ENCODE measurements at regions of chr2 and their contacts with region 1.

Region 1: GRCh38 chr2:99180755-99181623 is at the starts of genes MITD1 and MRPL30:
- DNase-seq: peak; percentile 97
- H3K4me3 Mint-ChIP-seq: peak within 1 kb of the TSS; percentile 100
- H3K27ac Mint-ChIP-seq: peak within 1 kb of the TSS; percentile 97
- H3K4me1 Mint-ChIP-seq: peaks cover 43% of the 10 kb centered on the region
- H3K27me3 Mint-ChIP-seq: no peaks in the 10 kb centered on the region
- total RNA-seq, gene MITD1: 49.9 and 52.8 TPM in 2 replicates
- total RNA-seq, gene MRPL30: 29.0 and 31.2 TPM in 2 replicates

Region 2: GRCh38 chr2:97645695-97646629 is 1535.0 kb before region 1 on chr2 and contains the start of gene COX5B:
- intact Hi-C with region 1: loop called (anchors 5 kb)
- DNase-seq: peak; percentile 100
- H3K4me3 Mint-ChIP-seq: peak within 1 kb of the TSS; percentile 94
- H3K27ac Mint-ChIP-seq: peak within 1 kb of the TSS; percentile 96
- H3K4me1 Mint-ChIP-seq: peaks cover 26% of the 10 kb centered on the region
- H3K27me3 Mint-ChIP-seq: peaks cover 4% of the 10 kb centered on the region
- total RNA-seq, gene COX5B: 227 and 233 TPM in 2 replicates

Region 3: DNA sequence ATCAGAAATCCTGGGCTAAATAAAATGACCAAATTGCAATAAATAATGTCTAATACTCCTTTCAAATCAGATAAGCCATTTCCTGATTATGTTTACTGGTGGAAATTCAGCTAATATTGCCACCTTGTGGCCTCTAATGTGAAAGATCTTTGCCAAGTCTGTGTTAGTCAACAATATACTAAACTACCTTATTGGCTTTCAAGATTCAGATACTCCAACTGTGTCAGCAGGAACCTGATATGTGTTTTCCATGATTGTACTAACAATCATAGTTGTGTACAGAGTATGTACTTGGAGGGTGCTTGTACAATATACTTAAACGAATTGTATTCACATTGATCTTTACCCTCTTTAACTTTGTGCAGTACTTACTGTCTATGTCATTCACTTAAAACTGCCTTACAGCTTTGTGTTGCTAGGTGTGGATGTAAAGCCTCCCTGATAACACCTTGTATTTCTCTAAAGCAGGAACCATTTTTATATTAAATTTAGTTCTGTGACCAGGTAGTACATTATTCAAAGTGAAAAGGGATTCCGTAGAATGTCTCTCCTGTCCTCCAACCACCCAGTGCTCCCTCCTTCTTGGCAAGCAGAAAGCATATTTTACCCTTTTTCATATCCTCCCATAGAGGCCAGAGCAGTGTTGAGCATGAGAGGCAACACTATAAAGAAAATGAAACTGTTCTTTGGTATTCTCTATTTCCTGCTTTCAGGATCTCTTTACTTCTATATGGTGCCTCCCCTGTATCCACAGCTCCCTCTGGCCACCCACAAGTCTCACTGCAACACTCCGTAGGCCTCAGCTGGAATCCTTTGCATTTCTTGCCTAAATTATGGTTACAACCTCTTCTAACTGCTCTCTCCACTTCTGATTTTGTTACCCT is 114.7 kb before region 1 on chr2:
- intact Hi-C with region 1: loop called (anchors 5 kb)
- DNase-seq: peak; percentile 74
- H3K4me3 Mint-ChIP-seq: no peak overlapping the region
- H3K27ac Mint-ChIP-seq: no peak overlapping the region
- H3K4me1 Mint-ChIP-seq: no peaks in the 10 kb centered on the region
- H3K27me3 Mint-ChIP-seq: no peaks in the 10 kb centered on the region

Region 4: DNA sequence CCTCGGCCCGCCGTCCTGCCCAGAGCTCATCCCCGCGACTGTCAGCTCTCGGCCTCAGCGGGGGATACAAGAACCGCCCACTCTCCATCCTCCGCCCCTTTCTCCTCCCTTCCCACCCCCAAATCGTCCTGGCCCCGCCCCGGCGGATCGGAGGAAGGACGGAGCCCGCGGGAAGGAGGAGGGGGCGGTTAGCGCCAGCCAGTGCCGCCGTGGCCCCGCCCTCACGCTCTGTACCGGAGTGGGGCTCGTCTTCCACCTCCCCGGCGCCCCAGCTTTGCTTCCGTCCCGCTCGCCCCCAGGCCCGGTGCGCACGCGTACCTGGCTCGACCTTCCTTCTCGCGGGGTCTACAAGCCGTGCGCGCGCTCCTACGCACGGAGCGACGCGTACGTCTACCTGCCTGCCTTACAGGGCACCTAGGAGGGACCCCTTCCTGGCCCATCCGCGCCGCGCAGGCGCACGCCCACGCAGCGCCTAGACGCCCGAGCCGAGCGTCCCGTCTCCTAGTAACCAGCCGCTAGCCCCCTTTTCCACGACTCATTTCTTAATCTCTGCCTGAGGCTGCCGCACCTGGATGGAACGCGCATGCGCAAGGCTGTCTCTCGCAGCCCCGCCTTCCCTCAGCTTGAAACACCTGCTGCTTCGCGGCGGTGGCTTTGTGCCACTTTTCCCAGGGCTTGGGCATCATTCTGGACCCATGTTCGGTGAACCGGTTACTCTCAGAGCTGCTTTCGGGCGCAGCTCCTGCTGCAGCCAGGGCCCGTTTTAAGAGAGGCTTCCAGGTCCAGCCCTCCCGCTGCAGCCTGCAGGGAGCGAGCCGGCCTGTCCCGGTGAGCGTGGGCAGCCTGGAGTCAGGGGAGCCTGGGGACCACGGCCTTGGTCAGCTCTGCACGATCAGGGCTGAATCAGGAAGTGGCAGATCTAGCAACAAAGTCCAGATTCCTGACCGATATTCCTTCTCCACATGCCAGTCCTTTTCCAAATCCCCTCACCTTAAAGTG is 39.6 kb before region 1 on chr2 and contains the start of gene C2orf15:
- intact Hi-C with region 1: loop called (anchors 1 kb)
- DNase-seq: peak; percentile 98
- H3K4me3 Mint-ChIP-seq: peak within 1 kb of the TSS; percentile 95
- H3K27ac Mint-ChIP-seq: peak within 1 kb of the TSS; percentile 91
- H3K4me1 Mint-ChIP-seq: peaks cover 22% of the 10 kb centered on the region
- H3K27me3 Mint-ChIP-seq: peaks cover 29% of the 10 kb centered on the region
- total RNA-seq, gene C2orf15: 0.26 and 0.40 TPM in 2 replicates

Region 5: GRCh38 chr2:99489761-99490622 is 309.0 kb after region 1 on chr2 and contains the start of gene REV1:
- intact Hi-C with region 1: loop called (anchors 1 kb)
- DNase-seq: peak; percentile 97
- H3K4me3 Mint-ChIP-seq: peak within 1 kb of the TSS; percentile 92
- H3K27ac Mint-ChIP-seq: peak within 1 kb of the TSS; percentile 95
- H3K4me1 Mint-ChIP-seq: peaks cover 25% of the 10 kb centered on the region
- H3K27me3 Mint-ChIP-seq: no peaks in the 10 kb centered on the region
- total RNA-seq, gene REV1: 47.8 and 48.9 TPM in 2 replicates

Measured in activated CD4-positive, alpha-beta T cell treated with anti-CD3 and anti-CD28 coated beads, Interleukin-2, amount 10 ng/mL, durations not matched to agents 24 days and 14 days (primary cell).